ENCODE measurements at regions of chr17 and their contacts with region 1.

Region 1: GRCh38 chr17:31558748-31559644 is 167.5 kb downstream of the RAB11FIP4 start:
- DNase-seq: peak; percentile 85
- H3K27ac ChIP-seq: peak overlapping the region; percentile 84
- CTCF ChIP-seq: peak; percentile 93

Region 2: DNA sequence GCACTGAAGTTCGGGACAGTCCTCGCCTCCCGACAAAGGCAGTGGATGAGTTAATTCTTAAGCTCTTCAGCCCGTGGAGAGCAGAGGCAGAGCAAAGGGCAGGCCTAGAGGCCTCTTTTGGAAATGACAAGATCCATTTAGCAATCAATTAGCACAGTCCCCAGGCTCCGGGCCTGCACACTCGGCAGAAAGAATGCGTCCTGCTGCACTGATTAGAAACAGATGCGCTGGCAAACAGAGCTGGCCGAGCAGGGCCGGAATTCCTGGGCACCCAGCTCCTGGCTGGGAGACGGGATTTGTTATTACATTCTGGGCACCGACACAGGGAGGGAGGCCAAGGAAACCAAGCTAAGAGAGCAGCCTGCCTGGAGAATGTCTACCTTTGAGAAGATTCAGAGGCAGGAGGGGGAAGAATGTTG is 137.2 kb after region 1 on chr17:
- CTCF ChIA-PET with region 1: no interaction called
- POLR2A ChIA-PET with region 1: no interaction called
- DNase-seq: no peak
- H3K27ac ChIP-seq: peak overlapping the region; percentile 78
- CTCF ChIP-seq: no peak

Region 3: GRCh38 chr17:31926100-31926729 is 367.2 kb after region 1 on chr17:
- CTCF ChIA-PET with region 1: interaction called, 11 read pairs
- POLR2A ChIA-PET with region 1: no interaction called
- DNase-seq: no peak
- H3K27ac ChIP-seq: no peak overlapping the region
- CTCF ChIP-seq: no peak